ENCODE measurements at regions of chr3 and their contacts with region 1.

Region 1: GRCh38 chr3:179451265-179452175 is at the start of gene GNB4:
- H3K4me3 ChIP-seq: peak within 1 kb of the TSS; percentile 84
- H3K27ac ChIP-seq: peak within 1 kb of the TSS; percentile 69
- H3K4me1 ChIP-seq: no peaks in the 10 kb centered on the region; the same call in 1 of the 2 replicates
- CTCF ChIP-seq: no peak

Region 2: GRCh38 chr3:179488213-179488612 is 36.7 kb after region 1 on chr3:
- CTCF ChIA-PET with region 1: no interaction called
- POLR2A ChIA-PET with region 1: no interaction called
- H3K4me3 ChIP-seq: no peak overlapping the region
- H3K27ac ChIP-seq: no peak overlapping the region
- H3K4me1 ChIP-seq: no peaks in the 10 kb centered on the region
- CTCF ChIP-seq: no peak

Region 3: GRCh38 chr3:179562591-179563270 is 111.2 kb after region 1 on chr3 and contains the start of gene ACTL6A:
- CTCF ChIA-PET with region 1: interaction called, 4 read pairs
- POLR2A ChIA-PET with region 1: interaction called, 10 read pairs
- H3K4me3 ChIP-seq: peak within 1 kb of the TSS; percentile 99
- H3K27ac ChIP-seq: peak within 1 kb of the TSS; percentile 74
- H3K4me1 ChIP-seq: no peaks in the 10 kb centered on the region
- CTCF ChIP-seq: no peak